ENCODE measurements at regions of chr5 and their contacts with region 1.

Region 1: GRCh38 chr5:10563945-10564837 is at the start of gene ANKRD33B:
- DNase-seq: peak; percentile 63
- ATAC-seq: peak; percentile 80
- H3K4me3 ChIP-seq: peak within 1 kb of the TSS; percentile 99
- H3K27ac ChIP-seq: peak within 1 kb of the TSS; percentile 86
- H3K4me1 ChIP-seq: peaks cover 28% of the 10 kb centered on the region
- H3K27me3 ChIP-seq: no peaks in the 10 kb centered on the region
- CTCF ChIP-seq: no peak
- POLR2A ChIP-seq: peak; percentile 80
- RAD21 ChIP-seq: no peak
- total RNA-seq, gene ANKRD33B: 2.5 and 2.8 TPM in 2 replicates

Region 2: DNA sequence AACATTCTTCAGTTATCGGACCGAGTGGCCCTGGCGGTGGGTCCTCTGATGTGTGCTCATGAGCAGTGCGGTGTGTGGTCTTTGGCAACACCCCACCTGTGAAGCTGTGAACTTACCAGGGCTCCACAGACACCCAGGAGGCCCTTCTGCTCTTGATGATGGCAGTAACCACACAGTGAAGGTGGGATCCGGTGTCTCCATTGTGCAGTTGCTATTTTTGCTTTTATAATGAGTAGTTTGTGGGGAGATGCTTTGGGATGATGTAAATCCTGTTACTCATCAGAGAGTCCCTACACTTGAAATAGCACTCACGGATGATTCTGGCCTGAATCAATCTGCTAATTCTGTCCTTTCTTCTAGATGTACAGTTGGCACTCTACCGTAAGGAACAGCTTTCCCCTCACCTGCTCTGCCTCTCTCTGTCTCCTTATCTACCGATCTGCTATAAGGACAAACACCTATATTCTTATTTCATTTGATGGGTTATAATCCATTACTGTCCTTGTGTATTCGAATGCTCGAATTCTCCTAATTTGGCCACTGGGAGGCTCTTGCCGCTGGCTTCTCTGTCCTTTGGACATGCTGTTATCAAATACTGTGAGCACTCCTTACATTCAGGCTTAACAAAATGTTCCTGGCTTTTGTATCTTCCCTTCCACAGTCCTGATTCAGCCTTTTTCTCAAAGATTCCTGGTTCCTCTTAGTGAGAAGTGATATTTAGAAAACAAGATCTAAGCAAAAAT is 334.7 kb before region 1 on chr5:
- CTCF ChIA-PET with region 1: no interaction called
- POLR2A ChIA-PET with region 1: no interaction called
- dilution Hi-C with region 1: no loop called
- in situ Hi-C with region 1: no loop called
- intact Hi-C with region 1: no loop called
- DNase-seq: peak; percentile 91
- ATAC-seq: peak; percentile 23
- H3K4me3 ChIP-seq: no peak overlapping the region
- H3K27ac ChIP-seq: peak overlapping the region; percentile 50; the same call in 1 of the 2 replicates
- H3K4me1 ChIP-seq: peaks cover 14% of the 10 kb centered on the region
- H3K27me3 ChIP-seq: no peaks in the 10 kb centered on the region
- CTCF ChIP-seq: 0 out of 2 replicates have a peak, but pooled peaks have one; percentile 18
- POLR2A ChIP-seq: peak; percentile 37; the same call in 1 of the 2 replicates
- RAD21 ChIP-seq: no peak; the same call in 1 of the 2 replicates

Region 3: DNA sequence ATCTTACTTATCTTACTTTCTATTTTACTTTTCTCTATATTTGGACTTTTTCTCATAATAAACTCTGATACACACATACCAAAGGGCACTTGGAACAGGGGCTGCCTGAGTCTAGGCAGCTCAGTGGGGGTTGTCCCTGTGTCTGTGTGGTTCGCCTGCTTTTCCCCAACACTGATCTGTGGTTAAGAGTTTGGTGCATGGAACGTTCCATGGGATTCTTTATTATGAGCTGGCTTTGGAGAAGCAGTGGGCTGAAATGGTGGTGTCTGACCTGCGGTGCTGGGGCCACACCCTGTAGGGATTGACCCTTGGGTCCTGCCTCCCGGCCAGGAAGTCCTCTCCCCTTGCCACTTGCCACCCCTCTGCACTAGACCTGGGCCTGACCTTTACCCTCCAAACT is 47.1 kb after region 1 on chr5:
- CTCF ChIA-PET with region 1: no interaction called
- POLR2A ChIA-PET with region 1: no interaction called
- dilution Hi-C with region 1: no loop called
- in situ Hi-C with region 1: no loop called
- intact Hi-C with region 1: loop called (anchors 5 kb)
- DNase-seq: peak; percentile 73
- ATAC-seq: peak; percentile 85
- H3K4me3 ChIP-seq: no peak overlapping the region
- H3K27ac ChIP-seq: peak overlapping the region; percentile 85
- H3K4me1 ChIP-seq: peaks cover 22% of the 10 kb centered on the region
- H3K27me3 ChIP-seq: no peaks in the 10 kb centered on the region
- CTCF ChIP-seq: no peak
- POLR2A ChIP-seq: no peak
- RAD21 ChIP-seq: no peak

Region 4: GRCh38 chr5:10627160-10627701 is 63.0 kb after region 1 on chr5:
- CTCF ChIA-PET with region 1: interaction called, 10 read pairs
- POLR2A ChIA-PET with region 1: no interaction called
- dilution Hi-C with region 1: no loop called
- in situ Hi-C with region 1: no loop called
- intact Hi-C with region 1: loop called (anchors 1 kb)
- DNase-seq: no peak
- ATAC-seq: peak; percentile 8
- H3K4me3 ChIP-seq: peak overlapping the region; percentile 11; the same call in 1 of the 2 replicates
- H3K27ac ChIP-seq: peak overlapping the region; percentile 32; the same call in 1 of the 2 replicates
- H3K4me1 ChIP-seq: peaks cover 8% of the 10 kb centered on the region
- H3K27me3 ChIP-seq: no peaks in the 10 kb centered on the region
- CTCF ChIP-seq: no peak
- POLR2A ChIP-seq: no peak
- RAD21 ChIP-seq: no peak

Measured in IMR-90 (cell line).